ENCODE measurements at regions of chr20 and their contacts with region 1.

Region 1: GRCh38 chr20:50054626-50055511 is 58.1 kb downstream of the UBE2V1 start:
- DNase-seq: no peak
- H3K4me3 ChIP-seq: peak overlapping the region in 1 of 2 donors; percentile 28
- H3K27ac ChIP-seq: peak overlapping the region; percentile 22 to 49
- H3K4me1 ChIP-seq: peaks cover 9 to 10% of the 10 kb centered on the region in 2 donors
- H3K27me3 ChIP-seq: no peaks in the 10 kb centered on the region
- CTCF ChIP-seq: no peak

Region 2: GRCh38 chr20:49318430-49319207 is 736.2 kb before region 1 on chr20:
- intact Hi-C with region 1: no loop called
- DNase-seq: no peak
- H3K4me3 ChIP-seq: peak overlapping the region; percentile 32 to 59
- H3K27ac ChIP-seq: no peak overlapping the region
- H3K4me1 ChIP-seq: peaks cover 12 to 13% of the 10 kb centered on the region in 2 donors
- H3K27me3 ChIP-seq: peaks cover 9% of the 10 kb centered on the region
- CTCF ChIP-seq: no peak

Region 3: GRCh38 chr20:50015991-50016770 is 38.7 kb before region 1 on chr20:
- intact Hi-C with region 1: loop called (anchors 5 kb)
- DNase-seq: no peak
- H3K4me3 ChIP-seq: no peak overlapping the region
- H3K27ac ChIP-seq: no peak overlapping the region
- H3K4me1 ChIP-seq: peaks cover 8 to 9% of the 10 kb centered on the region in 2 donors
- H3K27me3 ChIP-seq: no peaks in the 10 kb centered on the region
- CTCF ChIP-seq: no peak

Region 4: GRCh38 chr20:50085452-50086365 is 30.8 kb after region 1 on chr20:
- intact Hi-C with region 1: loop called (anchors 1 kb)
- DNase-seq: peak in 1 of 2 donors; percentile 66
- H3K4me3 ChIP-seq: peak overlapping the region in 1 of 2 donors; percentile 16
- H3K27ac ChIP-seq: peak overlapping the region in 1 of 2 donors; percentile 9
- H3K4me1 ChIP-seq: peaks cover 4 to 7% of the 10 kb centered on the region in 2 donors
- H3K27me3 ChIP-seq: no peaks in the 10 kb centered on the region
- CTCF ChIP-seq: peak; percentile 61 to 81 (median 74)

Measured in ascending aorta (tissue), 2 donors.